GM12878 (cell line): ENCODE measurements at regions of chr5 and their contacts with region 1.

Region 1: GRCh38 chr5:128736553-128736952 is 198.5 kb upstream of the FBN2 start:
- DNase-seq: no peak
- ATAC-seq: no peak
- H3K4me3 ChIP-seq: no peak overlapping the region
- H3K27ac ChIP-seq: no peak overlapping the region
- H3K4me1 ChIP-seq: no peaks in the 10 kb centered on the region
- H3K27me3 ChIP-seq: no peaks in the 10 kb centered on the region
- CTCF ChIP-seq: no peak
- EP300 ChIP-seq: no peak
- POLR2A ChIP-seq: no peak
- RAD21 ChIP-seq: no peak

Region 2: DNA sequence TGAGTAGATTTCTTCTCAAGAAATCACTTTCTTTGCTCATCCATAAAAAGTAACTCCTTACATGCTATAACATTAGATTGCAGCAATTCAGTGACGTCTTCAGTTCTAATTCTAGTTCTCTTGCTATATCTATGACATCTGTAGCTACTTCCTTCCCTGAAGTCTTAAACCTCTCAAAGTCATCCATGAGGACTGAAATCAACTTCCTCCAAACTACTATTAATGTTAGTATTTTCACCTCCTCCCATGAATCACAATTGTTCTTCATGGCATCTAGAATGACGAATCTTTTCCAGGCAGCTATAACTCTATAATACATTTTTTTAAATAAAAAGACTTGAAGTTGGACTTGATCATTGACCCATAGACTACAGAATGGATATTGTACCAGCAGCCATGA is 1265.3 kb before region 1 on chr5:
- CTCF ChIA-PET with region 1: no interaction called
- POLR2A ChIA-PET with region 1: no interaction called
- RAD21 ChIA-PET with region 1: no interaction called
- SMC1A ChIA-PET with region 1: no interaction called
- in situ Hi-C with region 1: no loop called
- intact Hi-C with region 1: loop called (anchors 5 kb)
- DNase-seq: no peak
- ATAC-seq: no peak
- H3K4me3 ChIP-seq: no peak overlapping the region
- H3K27ac ChIP-seq: no peak overlapping the region
- H3K4me1 ChIP-seq: no peaks in the 10 kb centered on the region
- H3K27me3 ChIP-seq: no peaks in the 10 kb centered on the region
- CTCF ChIP-seq: no peak
- EP300 ChIP-seq: no peak
- POLR2A ChIP-seq: no peak
- RAD21 ChIP-seq: no peak

Region 3: GRCh38 chr5:128579088-128579487 is 157.5 kb before region 1 on chr5:
- CTCF ChIA-PET with region 1: no interaction called
- POLR2A ChIA-PET with region 1: no interaction called
- RAD21 ChIA-PET with region 1: no interaction called
- SMC1A ChIA-PET with region 1: no interaction called
- in situ Hi-C with region 1: no loop called
- intact Hi-C with region 1: no loop called
- DNase-seq: no peak
- ATAC-seq: no peak
- H3K4me3 ChIP-seq: no peak overlapping the region
- H3K27ac ChIP-seq: no peak overlapping the region
- H3K4me1 ChIP-seq: no peaks in the 10 kb centered on the region
- H3K27me3 ChIP-seq: no peaks in the 10 kb centered on the region
- CTCF ChIP-seq: no peak
- EP300 ChIP-seq: no peak
- POLR2A ChIP-seq: no peak
- RAD21 ChIP-seq: no peak

Region 4: GRCh38 chr5:129113871-129114270 is 377.3 kb after region 1 on chr5:
- CTCF ChIA-PET with region 1: no interaction called
- POLR2A ChIA-PET with region 1: no interaction called
- RAD21 ChIA-PET with region 1: no interaction called
- SMC1A ChIA-PET with region 1: no interaction called
- in situ Hi-C with region 1: no loop called
- intact Hi-C with region 1: no loop called
- DNase-seq: no peak
- ATAC-seq: no peak
- H3K4me3 ChIP-seq: no peak overlapping the region
- H3K27ac ChIP-seq: no peak overlapping the region
- H3K4me1 ChIP-seq: no peaks in the 10 kb centered on the region
- H3K27me3 ChIP-seq: no peaks in the 10 kb centered on the region
- CTCF ChIP-seq: no peak; a peak in 1 of 6 replicates
- EP300 ChIP-seq: no peak
- POLR2A ChIP-seq: no peak
- RAD21 ChIP-seq: no peak